Naive thymus-derived CD4-positive, alpha-beta T cell (primary cell): ENCODE measurements at regions of chr1 and their contacts with region 1.

Region 1: DNA sequence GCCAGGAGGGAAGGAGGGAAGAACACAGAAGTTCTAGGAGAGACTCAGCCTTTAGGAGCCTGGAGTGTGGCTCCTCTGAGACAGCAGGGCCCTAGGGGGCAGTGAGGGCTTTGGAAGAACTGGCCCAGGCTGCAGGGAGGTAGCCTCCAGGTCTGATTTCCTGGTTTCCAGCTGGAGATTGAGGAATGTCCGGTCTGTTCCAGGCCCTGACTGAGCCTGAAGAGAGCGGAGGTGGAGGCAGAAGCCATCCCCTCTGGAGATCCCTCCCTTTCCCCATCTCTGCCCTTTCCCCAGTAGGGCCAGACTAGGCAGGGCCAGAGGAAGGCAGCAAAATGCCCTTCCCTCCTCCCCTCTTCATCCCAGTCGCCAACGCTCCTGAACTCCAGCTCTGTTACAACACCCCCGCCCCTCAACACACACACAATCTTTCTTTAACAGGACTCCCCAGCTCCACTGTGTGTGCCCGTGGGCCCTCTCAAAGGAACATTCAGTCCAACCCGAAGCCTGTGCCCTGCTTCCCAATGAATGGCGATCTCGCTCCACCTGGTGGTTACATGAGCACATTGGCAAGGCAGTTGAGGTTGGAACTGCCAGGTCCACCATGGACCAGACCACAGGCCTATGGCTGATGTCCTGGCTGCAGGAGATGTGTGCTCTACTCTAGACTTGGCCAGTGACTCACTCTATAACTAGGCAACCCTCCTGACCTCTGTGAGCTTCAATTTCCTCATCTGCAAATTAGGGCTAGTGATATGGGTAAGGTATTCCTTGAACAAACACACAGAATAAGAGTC is 32.0 kb downstream of the MAP7D1 start:
- DNase-seq: peak; percentile 56 to 86 (median 80)
- ATAC-seq: peak; percentile 99
- H3K4me3 ChIP-seq: no peak overlapping the region
- H3K4me3 Mint-ChIP-seq: no peak overlapping the region
- H3K27ac ChIP-seq: no peak overlapping the region
- H3K27ac Mint-ChIP-seq: peak overlapping the region; percentile 37 to 85 (median 73)
- H3K4me1 ChIP-seq: no peaks in the 10 kb centered on the region
- H3K4me1 Mint-ChIP-seq: peaks cover 0 to 16% (median 12%) of the 10 kb centered on the region in 7 donors
- H3K27me3 ChIP-seq: no peaks in the 10 kb centered on the region
- H3K27me3 Mint-ChIP-seq: no peaks in the 10 kb centered on the region

Region 2: DNA sequence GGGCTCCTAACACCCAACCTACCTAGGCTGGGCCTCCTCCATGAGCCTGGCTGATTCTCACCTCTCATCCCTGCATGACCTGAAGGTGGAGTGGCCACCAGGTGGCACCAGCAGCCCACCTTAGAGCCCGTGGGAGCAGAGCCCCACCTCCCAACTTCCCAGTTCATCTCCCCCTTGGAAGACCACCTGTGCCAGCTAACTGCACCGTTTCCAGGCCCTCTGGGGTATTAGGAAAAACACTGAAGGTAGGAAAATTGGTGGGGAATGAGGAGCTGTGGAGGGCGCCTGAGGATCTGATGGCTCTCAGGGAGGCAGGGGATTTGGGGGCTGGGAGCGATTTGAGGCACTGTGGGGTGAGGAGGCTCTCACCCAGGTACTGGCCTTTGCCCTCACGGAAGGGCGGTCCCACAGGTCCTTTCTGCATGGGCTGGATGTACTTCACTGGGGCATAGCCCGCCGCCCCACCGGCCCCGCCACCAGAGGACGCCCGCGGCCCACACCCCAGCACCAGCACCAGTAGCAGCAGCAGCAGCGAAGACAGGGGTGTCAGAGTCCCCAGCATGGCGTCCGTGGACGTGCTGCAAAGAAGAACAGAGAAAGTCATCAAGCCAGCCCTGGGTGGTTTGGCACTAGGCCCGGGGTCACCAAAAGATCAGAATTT is 88.2 kb before region 1 on chr1:
- CTCF ChIA-PET with region 1: interaction called, 10 read pairs
- POLR2A ChIA-PET with region 1: no interaction called
- intact Hi-C with region 1: loop called (anchors 1 kb)
- DNase-seq: peak; percentile 50 to 79 (median 65)
- ATAC-seq: peak; percentile 92
- H3K4me3 ChIP-seq: no peak overlapping the region
- H3K4me3 Mint-ChIP-seq: peak overlapping the region in 5 of 10 donors; percentile 12 to 50 (median 35)
- H3K27ac ChIP-seq: no peak overlapping the region
- H3K27ac Mint-ChIP-seq: peak overlapping the region in 1 of 9 donors; percentile 14
- H3K4me1 ChIP-seq: no peaks in the 10 kb centered on the region
- H3K4me1 Mint-ChIP-seq: peaks cover 0 to 10% (median 2%) of the 10 kb centered on the region in 7 donors
- H3K27me3 ChIP-seq: no peaks in the 10 kb centered on the region
- H3K27me3 Mint-ChIP-seq: no peaks in the 10 kb centered on the region

Region 3: DNA sequence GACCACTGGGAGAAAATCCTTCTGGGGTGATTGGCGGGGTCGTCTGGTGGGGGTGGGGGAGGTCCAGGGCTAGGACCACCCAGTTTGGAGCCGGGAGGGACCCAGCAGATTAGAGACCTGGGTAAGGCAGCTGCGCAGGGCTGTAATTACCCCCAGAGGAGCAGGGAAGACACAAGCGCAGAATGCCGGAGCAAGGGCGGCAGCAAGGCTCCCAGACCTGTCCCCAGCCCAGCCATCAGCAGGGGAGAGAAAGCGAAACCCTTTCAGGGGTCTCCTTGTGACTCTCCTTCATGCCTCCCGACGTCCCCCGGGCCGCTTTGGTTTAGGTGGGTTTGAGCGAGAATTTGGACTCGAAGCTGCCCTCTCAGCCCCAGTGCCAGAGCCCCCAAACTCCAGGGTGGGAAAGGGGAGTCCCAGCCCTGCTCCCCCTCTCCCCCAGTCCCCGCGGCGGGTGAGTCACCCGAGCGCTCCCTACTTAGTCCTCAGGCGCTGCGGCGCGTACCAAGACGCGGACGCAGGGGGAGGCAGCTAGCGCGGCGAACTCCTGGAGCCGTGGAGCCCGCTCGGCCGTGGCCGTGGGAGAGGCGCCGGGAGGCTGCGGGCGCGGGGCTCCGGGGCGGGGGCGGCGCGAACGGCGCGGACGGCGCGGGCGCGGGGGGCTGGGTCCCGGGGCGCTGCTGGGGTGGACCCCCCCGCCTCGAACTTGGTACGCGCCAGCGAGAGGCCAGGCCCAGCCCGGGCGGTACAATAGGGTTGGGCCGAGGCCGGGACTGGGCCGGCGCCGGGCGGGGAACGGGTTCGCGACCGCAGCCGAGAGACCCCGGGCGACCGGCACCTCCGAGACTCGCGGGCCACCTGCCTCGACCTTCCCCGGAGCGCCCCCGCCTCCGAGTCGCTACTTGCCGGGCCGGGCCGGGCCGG is 32.3 kb before region 1 on chr1 and contains the start of gene MAP7D1:
- CTCF ChIA-PET with region 1: interaction called, 165 read pairs
- POLR2A ChIA-PET with region 1: interaction called, 138 read pairs
- intact Hi-C with region 1: loop called in 1 of 2 experiments (anchors 1 kb)
- DNase-seq: peak; percentile 80 to 90 (median 87)
- ATAC-seq: peak; percentile 89
- H3K4me3 ChIP-seq: peak within 1 kb of the TSS; percentile 97
- H3K4me3 Mint-ChIP-seq: peak within 1 kb of the TSS; percentile 85 to 95 (median 93)
- H3K27ac ChIP-seq: peak within 1 kb of the TSS; percentile 97
- H3K27ac Mint-ChIP-seq: peak within 1 kb of the TSS; percentile 90 to 99 (median 97)
- H3K4me1 ChIP-seq: peaks cover 58 to 66% of the 10 kb centered on the region in 2 donors
- H3K4me1 Mint-ChIP-seq: peaks cover 58 to 79% (median 71%) of the 10 kb centered on the region in 7 donors
- H3K27me3 ChIP-seq: no peaks in the 10 kb centered on the region
- H3K27me3 Mint-ChIP-seq: no peaks in the 10 kb centered on the region
- total RNA-seq, gene MAP7D1: 156 to 257 (median 235) TPM

Region 4: GRCh38 chr1:36160949-36161485 is 27.0 kb before region 1 on chr1:
- CTCF ChIA-PET with region 1: interaction called, 62 read pairs
- POLR2A ChIA-PET with region 1: interaction called, 138 read pairs
- intact Hi-C with region 1: loop called in 1 of 2 experiments (anchors 1 kb)
- DNase-seq: peak; percentile 27 to 72 (median 66)
- ATAC-seq: peak; percentile 44
- H3K4me3 ChIP-seq: peak overlapping the region; percentile 59
- H3K4me3 Mint-ChIP-seq: peak overlapping the region; percentile 79 to 92 (median 87)
- H3K27ac ChIP-seq: peak overlapping the region; percentile 94
- H3K27ac Mint-ChIP-seq: peak overlapping the region; percentile 92 to 99 (median 97)
- H3K4me1 ChIP-seq: peaks cover 56 to 66% of the 10 kb centered on the region in 2 donors
- H3K4me1 Mint-ChIP-seq: peaks cover 52 to 79% (median 70%) of the 10 kb centered on the region in 7 donors
- H3K27me3 ChIP-seq: no peaks in the 10 kb centered on the region
- H3K27me3 Mint-ChIP-seq: no peaks in the 10 kb centered on the region

Region 5: GRCh38 chr1:36166938-36167910 is 20.8 kb before region 1 on chr1:
- CTCF ChIA-PET with region 1: interaction called, 62 read pairs
- POLR2A ChIA-PET with region 1: interaction called, 68 read pairs
- intact Hi-C with region 1: no loop called
- DNase-seq: no peak
- ATAC-seq: no peak
- H3K4me3 ChIP-seq: no peak overlapping the region
- H3K4me3 Mint-ChIP-seq: peak overlapping the region in 5 of 10 donors; percentile 1 to 58 (median 17)
- H3K27ac ChIP-seq: peak overlapping the region; percentile 40
- H3K27ac Mint-ChIP-seq: peak overlapping the region; percentile 32 to 94 (median 87)
- H3K4me1 ChIP-seq: peaks cover 18 to 22% of the 10 kb centered on the region in 2 donors
- H3K4me1 Mint-ChIP-seq: peaks cover 41 to 69% (median 58%) of the 10 kb centered on the region in 7 donors
- H3K27me3 ChIP-seq: no peaks in the 10 kb centered on the region
- H3K27me3 Mint-ChIP-seq: no peaks in the 10 kb centered on the region

Region 6: DNA sequence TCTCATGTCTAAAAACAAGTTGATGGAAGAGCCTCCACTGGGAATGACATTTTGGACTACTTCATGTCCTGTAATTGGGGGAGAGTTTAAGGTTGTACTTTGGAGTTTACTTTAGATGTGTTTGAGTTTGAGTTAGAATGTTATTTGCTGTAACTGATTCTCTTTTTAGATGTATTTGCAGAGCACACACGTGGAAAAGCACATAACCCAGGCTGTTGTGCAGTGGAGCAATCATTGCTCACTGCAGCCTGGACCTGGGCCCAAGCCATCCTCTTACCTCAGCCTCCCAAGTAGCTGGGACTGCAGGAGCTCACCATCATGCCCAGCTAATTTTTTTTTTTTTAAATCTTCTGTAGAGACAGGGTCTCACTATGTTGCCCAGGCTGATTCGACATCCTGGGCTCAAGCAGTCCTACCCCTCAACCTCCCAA is 81.4 kb after region 1 on chr1:
- CTCF ChIA-PET with region 1: no interaction called
- POLR2A ChIA-PET with region 1: no interaction called
- intact Hi-C with region 1: no loop called
- DNase-seq: no peak
- ATAC-seq: no peak
- H3K4me3 ChIP-seq: no peak overlapping the region
- H3K4me3 Mint-ChIP-seq: no peak overlapping the region
- H3K27ac ChIP-seq: no peak overlapping the region
- H3K27ac Mint-ChIP-seq: peak overlapping the region in 4 of 9 donors; percentile 14 to 81 (median 50)
- H3K4me1 ChIP-seq: no peaks in the 10 kb centered on the region
- H3K4me1 Mint-ChIP-seq: peaks cover 7 to 33% (median 19%) of the 10 kb centered on the region in 7 donors
- H3K27me3 ChIP-seq: no peaks in the 10 kb centered on the region
- H3K27me3 Mint-ChIP-seq: no peaks in the 10 kb centered on the region

Region 7: GRCh38 chr1:36285448-36286101 is 97.6 kb after region 1 on chr1:
- CTCF ChIA-PET with region 1: interaction called, 25 read pairs
- POLR2A ChIA-PET with region 1: interaction called, 4 read pairs
- intact Hi-C with region 1: loop called (anchors 1 kb)
- DNase-seq: peak in 7 of 9 donors; percentile 60 to 80 (median 73)
- ATAC-seq: peak; percentile 96
- H3K4me3 ChIP-seq: no peak overlapping the region
- H3K4me3 Mint-ChIP-seq: no peak overlapping the region
- H3K27ac ChIP-seq: no peak overlapping the region
- H3K27ac Mint-ChIP-seq: peak overlapping the region in 8 of 9 donors; percentile 3 to 87 (median 42)
- H3K4me1 ChIP-seq: no peaks in the 10 kb centered on the region
- H3K4me1 Mint-ChIP-seq: peaks cover 4 to 34% (median 17%) of the 10 kb centered on the region in 7 donors
- H3K27me3 ChIP-seq: no peaks in the 10 kb centered on the region
- H3K27me3 Mint-ChIP-seq: no peaks in the 10 kb centered on the region